Panc1 (cell line): ENCODE measurements at regions of chr15 and their contacts with region 1.

Region 1: GRCh38 chr15:45457641-45458433 is 64.7 kb downstream of the SLC30A4 start:
- DNase-seq: peak; percentile 87
- ATAC-seq: peak; percentile 60
- H3K4me3 ChIP-seq: peak overlapping the region; percentile 45 to 57
- H3K27ac ChIP-seq: peak overlapping the region; percentile 89
- H3K4me1 ChIP-seq: peaks cover 44% of the 10 kb centered on the region
- H3K27me3 ChIP-seq: no peaks in the 10 kb centered on the region
- CTCF ChIP-seq: peak; percentile 82

Region 2: DNA sequence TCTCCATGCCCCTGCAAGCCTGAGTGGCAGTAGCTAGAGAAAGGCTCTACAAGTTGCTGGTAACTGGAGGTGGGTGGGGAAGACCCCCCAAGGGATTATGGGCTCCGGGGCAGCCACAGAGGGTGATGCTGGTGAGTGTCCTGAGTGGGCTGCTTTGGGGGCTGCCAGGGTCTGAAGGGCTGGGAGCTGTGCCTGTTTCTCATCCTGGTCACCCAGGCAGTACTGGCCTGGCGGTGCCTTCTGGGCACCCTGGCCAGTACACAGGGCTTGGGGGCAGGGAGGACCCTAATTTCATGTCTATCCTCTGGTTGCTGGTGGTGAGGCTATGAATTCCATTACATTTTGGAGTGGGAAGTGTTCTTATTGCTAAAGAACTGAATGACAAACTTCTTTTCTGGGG is 33.4 kb before region 1 on chr15:
- CTCF ChIA-PET with region 1: interaction called, 43 read pairs
- POLR2A ChIA-PET with region 1: interaction called, 5 read pairs
- in situ Hi-C with region 1: no loop called
- intact Hi-C with region 1: loop called (anchors 5 kb)
- DNase-seq: no peak
- ATAC-seq: no peak
- H3K4me3 ChIP-seq: no peak overlapping the region
- H3K27ac ChIP-seq: no peak overlapping the region
- H3K4me1 ChIP-seq: peaks cover 5% of the 10 kb centered on the region
- H3K27me3 ChIP-seq: no peaks in the 10 kb centered on the region
- CTCF ChIP-seq: no peak

Region 3: DNA sequence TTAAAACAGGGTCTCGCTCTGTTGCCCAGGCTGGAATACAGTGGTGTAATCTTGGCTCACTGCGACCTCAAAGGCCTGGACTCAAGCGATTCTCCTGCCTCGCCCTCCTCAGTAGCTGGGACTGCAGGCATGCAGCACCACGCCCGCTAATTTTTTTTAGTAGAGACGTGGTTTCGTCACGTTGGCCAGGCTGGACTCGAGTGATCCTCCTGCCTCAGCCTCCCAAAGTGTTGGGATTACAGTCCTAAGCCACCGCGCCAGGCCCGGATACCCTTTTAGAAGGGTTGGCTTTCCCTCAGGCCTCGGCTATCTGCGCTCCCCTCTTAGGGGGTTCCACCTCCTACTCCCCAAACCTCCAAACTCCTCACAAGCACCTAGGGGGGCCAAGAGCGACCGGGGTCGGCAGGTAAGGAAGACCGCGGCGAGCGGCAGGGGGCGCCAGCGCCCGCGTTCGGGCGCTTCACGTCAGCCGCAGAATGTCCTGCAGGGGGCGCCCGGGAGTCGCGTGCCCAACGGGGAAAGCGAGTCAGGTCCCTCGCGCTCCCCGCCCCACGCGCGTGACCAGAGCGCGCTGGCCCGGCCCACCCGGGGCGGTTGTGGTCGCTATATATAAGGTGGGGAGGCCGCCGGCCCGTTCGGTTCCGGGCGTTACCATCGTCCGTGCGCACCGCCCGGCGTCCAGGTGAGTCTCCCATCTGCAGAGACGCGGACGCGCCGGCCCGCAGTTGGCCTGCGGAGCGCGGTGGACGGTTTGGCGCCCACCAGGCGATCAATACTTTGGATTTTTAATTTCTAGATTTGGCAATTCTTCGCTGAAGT is 27.7 kb before region 1 on chr15:
- CTCF ChIA-PET with region 1: interaction called, 43 read pairs
- POLR2A ChIA-PET with region 1: interaction called, 5 read pairs
- in situ Hi-C with region 1: no loop called
- intact Hi-C with region 1: loop called (anchors 1 kb)
- DNase-seq: peak; percentile 39
- ATAC-seq: peak; percentile 91
- H3K4me3 ChIP-seq: peak overlapping the region; percentile 52 to 75
- H3K27ac ChIP-seq: peak overlapping the region; percentile 83
- H3K4me1 ChIP-seq: peaks cover 13% of the 10 kb centered on the region
- H3K27me3 ChIP-seq: no peaks in the 10 kb centered on the region
- CTCF ChIP-seq: peak; percentile 100

Region 4: DNA sequence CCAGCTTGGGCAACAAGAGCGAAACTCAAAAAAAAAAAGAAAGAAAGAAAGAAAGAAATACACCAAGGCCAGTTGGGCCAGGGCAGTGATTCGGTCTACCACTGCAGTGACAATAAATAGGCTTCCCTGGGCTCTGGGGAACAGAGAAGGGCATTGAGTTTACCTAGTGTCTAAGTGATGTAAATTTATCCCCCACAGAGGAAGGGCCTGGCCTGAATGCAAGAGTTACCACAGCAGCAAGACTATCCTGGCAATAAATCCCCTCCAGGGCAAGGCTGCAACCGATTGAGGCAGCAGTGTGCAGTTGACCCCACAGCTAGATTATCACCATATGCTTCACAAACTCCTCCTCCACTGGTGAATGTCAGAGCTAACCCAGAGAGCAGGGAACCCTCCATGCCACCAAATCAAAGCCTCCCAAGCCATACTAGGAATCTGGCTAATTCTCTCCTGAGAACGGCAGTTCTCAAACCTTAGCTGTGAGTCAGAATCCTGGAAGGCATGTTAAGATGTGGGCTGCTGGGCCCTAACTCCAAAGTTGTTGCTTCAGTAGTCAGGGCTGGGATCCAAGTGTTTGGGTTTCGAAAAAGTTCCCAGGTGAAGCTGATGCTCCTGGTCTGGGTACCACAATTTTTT is 15.2 kb before region 1 on chr15:
- CTCF ChIA-PET with region 1: interaction called, 13 read pairs
- POLR2A ChIA-PET with region 1: interaction called, 5 read pairs
- in situ Hi-C with region 1: no loop called
- intact Hi-C with region 1: no loop called
- DNase-seq: no peak
- ATAC-seq: no peak
- H3K4me3 ChIP-seq: no peak overlapping the region
- H3K27ac ChIP-seq: 0 out of 2 replicates have a peak overlapping the region, but pooled peaks have one; percentile 15
- H3K4me1 ChIP-seq: peaks cover 17% of the 10 kb centered on the region
- H3K27me3 ChIP-seq: no peaks in the 10 kb centered on the region
- CTCF ChIP-seq: no peak

Region 5: GRCh38 chr15:45499426-45499825 is 41.6 kb after region 1 on chr15:
- CTCF ChIA-PET with region 1: no interaction called
- POLR2A ChIA-PET with region 1: no interaction called
- in situ Hi-C with region 1: no loop called
- intact Hi-C with region 1: no loop called
- DNase-seq: no peak
- ATAC-seq: no peak
- H3K4me3 ChIP-seq: no peak overlapping the region
- H3K27ac ChIP-seq: no peak overlapping the region
- H3K4me1 ChIP-seq: no peaks in the 10 kb centered on the region
- H3K27me3 ChIP-seq: no peaks in the 10 kb centered on the region
- CTCF ChIP-seq: no peak

Region 6: GRCh38 chr15:45510758-45511280 is 53.0 kb after region 1 on chr15:
- CTCF ChIA-PET with region 1: no interaction called
- POLR2A ChIA-PET with region 1: no interaction called
- in situ Hi-C with region 1: no loop called
- intact Hi-C with region 1: no loop called
- DNase-seq: no peak
- ATAC-seq: no peak
- H3K4me3 ChIP-seq: no peak overlapping the region
- H3K27ac ChIP-seq: no peak overlapping the region
- H3K4me1 ChIP-seq: no peaks in the 10 kb centered on the region
- H3K27me3 ChIP-seq: no peaks in the 10 kb centered on the region
- CTCF ChIP-seq: no peak

Region 7: GRCh38 chr15:45611305-45611704 is 153.5 kb after region 1 on chr15:
- CTCF ChIA-PET with region 1: interaction called, 9 read pairs
- POLR2A ChIA-PET with region 1: no interaction called
- in situ Hi-C with region 1: no loop called
- intact Hi-C with region 1: loop called (anchors 1 kb)
- DNase-seq: no peak
- ATAC-seq: no peak
- H3K4me3 ChIP-seq: no peak overlapping the region
- H3K27ac ChIP-seq: no peak overlapping the region
- H3K4me1 ChIP-seq: peaks cover 7% of the 10 kb centered on the region; the same call in 1 of the 2 replicates
- H3K27me3 ChIP-seq: no peaks in the 10 kb centered on the region
- CTCF ChIP-seq: peak; percentile 65

Region 8: GRCh38 chr15:45660231-45660979 is 202.6 kb after region 1 on chr15:
- CTCF ChIA-PET with region 1: no interaction called
- POLR2A ChIA-PET with region 1: no interaction called
- in situ Hi-C with region 1: no loop called
- intact Hi-C with region 1: no loop called
- DNase-seq: no peak
- ATAC-seq: 0 out of 2 replicates have a peak, but pooled peaks have one; percentile 36
- H3K4me3 ChIP-seq: no peak overlapping the region
- H3K27ac ChIP-seq: no peak overlapping the region
- H3K4me1 ChIP-seq: 0 out of 2 replicates have a peak, but pooled peaks cover 6% of the 10 kb centered on the region
- H3K27me3 ChIP-seq: no peaks in the 10 kb centered on the region
- CTCF ChIP-seq: no peak